Endothelial cell of umbilical vein (primary cell): ENCODE measurements at regions of chrX and their contacts with region 1.

Region 1: GRCh38 chrX:30971774-30972603 is 82.9 kb upstream of the TAB3 start:
- DNase-seq: peak; percentile 23
- H3K4me3 ChIP-seq: peak overlapping the region in 1 of 3 experiments; percentile 8
- H3K27ac ChIP-seq: no peak overlapping the region
- H3K4me1 ChIP-seq: no peaks in the 10 kb centered on the region
- H3K27me3 ChIP-seq: peaks cover 0 to 1% of the 10 kb centered on the region in 2 experiments
- CTCF ChIP-seq: peak; percentile 54 to 67
- POLR2A ChIP-seq: no peak

Region 2: DNA sequence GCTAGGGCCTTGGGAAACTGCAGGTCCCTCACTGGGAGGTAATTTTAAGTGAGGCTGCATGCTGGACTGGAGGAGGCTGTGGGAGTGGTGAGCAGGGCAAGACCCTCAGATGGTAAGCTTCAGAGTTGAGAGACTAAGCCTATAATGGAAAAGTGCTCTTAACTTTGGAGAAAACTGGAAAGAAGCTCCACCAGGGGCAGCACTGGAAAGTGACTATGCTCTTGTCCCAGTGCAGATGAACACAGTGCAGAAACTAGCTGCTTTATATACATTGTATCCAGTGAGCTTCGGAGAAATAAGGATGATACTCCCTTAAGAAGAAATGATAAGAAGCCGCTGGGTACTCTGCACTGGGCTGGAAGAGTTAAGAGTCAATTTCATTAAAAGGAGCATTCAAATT is 759.8 kb before region 1 on chrX:
- CTCF ChIA-PET with region 1: no interaction called
- POLR2A ChIA-PET with region 1: no interaction called
- dilution Hi-C with region 1: no loop called
- intact Hi-C with region 1: no loop called
- DNase-seq: no peak
- H3K4me3 ChIP-seq: no peak overlapping the region
- H3K27ac ChIP-seq: no peak overlapping the region
- H3K4me1 ChIP-seq: no peaks in the 10 kb centered on the region
- H3K27me3 ChIP-seq: no peaks in the 10 kb centered on the region
- CTCF ChIP-seq: no peak
- POLR2A ChIP-seq: no peak

Region 3: GRCh38 chrX:31293409-31293808 is 321.4 kb after region 1 on chrX:
- CTCF ChIA-PET with region 1: no interaction called
- POLR2A ChIA-PET with region 1: no interaction called
- dilution Hi-C with region 1: no loop called
- intact Hi-C with region 1: loop called (anchors 10 kb)
- DNase-seq: peak; percentile 13
- H3K4me3 ChIP-seq: no peak overlapping the region
- H3K27ac ChIP-seq: no peak overlapping the region
- H3K4me1 ChIP-seq: no peaks in the 10 kb centered on the region
- H3K27me3 ChIP-seq: no peaks in the 10 kb centered on the region
- CTCF ChIP-seq: peak in 1 of 2 donors; percentile 16
- POLR2A ChIP-seq: no peak

Region 4: DNA sequence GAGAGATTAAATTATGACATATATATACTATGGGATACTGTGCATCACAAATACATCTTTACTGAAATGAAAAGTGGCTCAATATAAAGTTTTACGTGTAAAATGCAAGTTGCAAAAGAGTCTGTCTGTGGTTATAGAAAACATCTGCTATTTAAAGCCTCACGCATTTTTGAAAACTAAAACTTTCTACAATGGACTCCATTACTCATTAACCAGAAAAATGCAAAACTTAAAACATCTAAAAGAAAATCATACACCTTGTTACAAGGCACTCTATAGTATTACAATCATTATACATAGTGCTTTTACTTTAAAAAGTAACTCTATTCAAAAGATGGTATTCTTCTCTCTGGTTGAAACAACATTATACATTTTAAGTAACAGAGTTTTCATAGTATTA is 1483.7 kb after region 1 on chrX:
- CTCF ChIA-PET with region 1: no interaction called
- POLR2A ChIA-PET with region 1: no interaction called
- dilution Hi-C with region 1: no loop called
- intact Hi-C with region 1: loop called (anchors 5 kb)
- DNase-seq: no peak
- H3K4me3 ChIP-seq: no peak overlapping the region
- H3K27ac ChIP-seq: no peak overlapping the region
- H3K4me1 ChIP-seq: no peaks in the 10 kb centered on the region
- H3K27me3 ChIP-seq: no peaks in the 10 kb centered on the region
- CTCF ChIP-seq: no peak
- POLR2A ChIP-seq: no peak